A549 (cell line): ENCODE measurements at regions of chr20 and their contacts with region 1.

Region 1: DNA sequence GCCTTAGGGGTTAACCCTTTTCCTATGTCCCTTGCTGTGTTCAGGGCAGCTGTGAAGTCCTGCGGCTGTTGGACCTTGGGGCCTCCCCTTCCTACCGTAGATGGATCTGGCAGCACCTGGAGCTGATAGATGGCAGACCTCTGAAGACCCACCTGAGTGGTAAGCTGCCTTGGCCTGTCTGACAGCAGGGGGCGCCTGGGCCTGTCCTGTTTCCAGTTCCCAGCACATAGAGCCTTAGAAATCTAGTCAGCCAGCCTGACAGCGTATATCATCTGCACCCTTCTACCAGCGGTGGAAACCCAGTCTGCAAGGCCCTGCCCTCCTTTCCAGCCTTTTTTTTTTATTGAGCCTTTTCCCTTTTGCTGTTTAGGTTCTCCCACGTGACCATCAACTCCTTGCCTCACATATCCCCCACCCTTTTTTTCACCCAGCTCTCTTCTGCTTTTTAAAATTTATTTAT is 26.6 kb downstream of the CNBD2 start:
- DNase-seq: peak; percentile 87 to 91
- ATAC-seq: peak; percentile 94 to 97
- H3K4me3 ChIP-seq: no peak overlapping the region
- H3K27ac ChIP-seq: peak overlapping the region; percentile 39 to 55; a peak in 1 of 6 replicates
- H3K4me1 ChIP-seq: peaks cover 23% of the 10 kb centered on the region
- CTCF ChIP-seq: peak; percentile 93
- EP300 ChIP-seq: no peak
- POLR2A ChIP-seq: no peak
- RAD21 ChIP-seq: peak; percentile 96 to 97

Region 2: GRCh38 chr20:35806075-35806474 is 188.9 kb before region 1 on chr20:
- CTCF ChIA-PET with region 1: no interaction called
- POLR2A ChIA-PET with region 1: no interaction called
- DNase-seq: no peak
- ATAC-seq: no peak
- H3K4me3 ChIP-seq: no peak overlapping the region
- H3K27ac ChIP-seq: no peak overlapping the region
- H3K4me1 ChIP-seq: no peaks in the 10 kb centered on the region
- CTCF ChIP-seq: no peak
- EP300 ChIP-seq: no peak
- POLR2A ChIP-seq: no peak
- RAD21 ChIP-seq: no peak

Region 3: DNA sequence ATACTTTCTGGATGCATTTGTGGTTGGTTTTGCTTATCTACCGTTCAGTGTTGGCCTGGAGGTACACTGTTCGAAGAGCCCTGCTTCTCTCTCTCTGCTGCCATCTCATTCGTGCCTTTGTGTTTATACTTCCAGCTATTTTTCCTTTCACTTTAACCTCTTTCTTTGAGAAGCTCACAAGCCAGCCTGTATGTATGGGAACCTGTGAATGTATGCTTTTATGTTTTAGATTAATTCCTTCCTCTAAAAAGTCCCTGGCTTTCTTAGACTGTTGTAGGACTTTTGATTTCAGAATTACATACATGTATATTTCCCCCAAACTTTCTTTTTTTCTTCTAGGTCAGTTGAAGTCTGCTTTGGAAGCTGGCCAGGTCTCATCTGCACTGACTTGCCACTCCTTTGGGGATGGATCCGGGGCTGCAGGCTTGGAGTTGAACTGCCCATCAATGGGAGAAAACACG is 123.7 kb before region 1 on chr20:
- CTCF ChIA-PET with region 1: no interaction called
- POLR2A ChIA-PET with region 1: no interaction called
- DNase-seq: peak in 1 of 2 experiments; percentile 50
- ATAC-seq: peak; percentile 70 to 74; a peak in 5 of 6 replicates
- H3K4me3 ChIP-seq: no peak overlapping the region
- H3K27ac ChIP-seq: peak overlapping the region; percentile 60 to 65
- H3K4me1 ChIP-seq: peaks cover 70% of the 10 kb centered on the region
- CTCF ChIP-seq: no peak
- EP300 ChIP-seq: no peak
- POLR2A ChIP-seq: no peak
- RAD21 ChIP-seq: no peak

Region 4: GRCh38 chr20:35978041-35978513 is 16.9 kb before region 1 on chr20:
- CTCF ChIA-PET with region 1: interaction called, 137 read pairs
- POLR2A ChIA-PET with region 1: no interaction called
- DNase-seq: no peak
- ATAC-seq: no peak
- H3K4me3 ChIP-seq: no peak overlapping the region
- H3K27ac ChIP-seq: peak overlapping the region; percentile 8 to 28; a peak in 3 of 6 replicates
- H3K4me1 ChIP-seq: peaks cover 13% of the 10 kb centered on the region; the same call in 2 of the 3 replicates
- CTCF ChIP-seq: no peak
- EP300 ChIP-seq: no peak
- POLR2A ChIP-seq: no peak
- RAD21 ChIP-seq: no peak

Region 5: GRCh38 chr20:36017034-36017951 is 22.3 kb after region 1 on chr20:
- CTCF ChIA-PET with region 1: interaction called, 40 read pairs
- POLR2A ChIA-PET with region 1: no interaction called
- DNase-seq: peak; percentile 65 to 81
- ATAC-seq: peak; percentile 89 to 94
- H3K4me3 ChIP-seq: no peak overlapping the region; the same call in 2 of the 3 replicates
- H3K27ac ChIP-seq: peak overlapping the region; percentile 73 to 84
- H3K4me1 ChIP-seq: peaks cover 25% of the 10 kb centered on the region
- CTCF ChIP-seq: no peak
- EP300 ChIP-seq: no peak
- POLR2A ChIP-seq: no peak
- RAD21 ChIP-seq: no peak

Region 6: DNA sequence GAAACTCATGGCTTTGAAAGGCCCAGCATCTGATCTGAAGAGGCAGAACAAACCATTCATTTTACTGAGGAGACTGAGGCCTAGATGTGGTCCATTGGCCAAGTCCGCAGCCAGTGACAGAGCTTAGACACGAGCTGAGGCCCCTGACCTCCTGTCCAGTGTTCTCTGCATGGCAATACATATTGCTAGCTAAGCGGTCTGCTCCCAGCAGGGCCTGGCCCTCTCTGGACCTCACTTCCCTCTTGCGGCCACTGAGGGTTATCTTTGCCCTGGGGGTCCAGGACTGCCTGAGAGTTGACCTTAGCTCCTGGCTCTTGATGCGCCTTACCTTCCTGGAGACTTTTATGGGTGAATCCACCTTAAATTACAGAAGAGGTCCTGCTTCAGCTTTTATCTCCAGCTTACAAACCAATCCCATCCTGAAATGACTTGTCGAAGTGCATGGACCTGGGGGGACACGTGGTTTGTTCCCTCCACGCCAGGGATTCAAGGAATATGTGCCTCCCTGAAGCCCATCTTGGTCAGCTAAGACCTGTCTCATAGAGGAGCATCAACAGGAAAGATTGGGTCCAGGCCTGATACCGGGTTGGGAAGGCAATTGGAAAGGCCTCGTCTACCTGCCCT is 49.0 kb after region 1 on chr20:
- CTCF ChIA-PET with region 1: interaction called, 12 read pairs
- POLR2A ChIA-PET with region 1: interaction called, 6 read pairs
- DNase-seq: no peak
- ATAC-seq: peak; percentile 52 to 68; a peak in 4 of 6 replicates
- H3K4me3 ChIP-seq: no peak overlapping the region
- H3K27ac ChIP-seq: no peak overlapping the region
- H3K4me1 ChIP-seq: peaks cover 27% of the 10 kb centered on the region; the same call in 2 of the 3 replicates
- CTCF ChIP-seq: no peak
- EP300 ChIP-seq: no peak
- POLR2A ChIP-seq: no peak
- RAD21 ChIP-seq: no peak

Region 7: GRCh38 chr20:36113566-36114250 is 118.7 kb after region 1 on chr20:
- CTCF ChIA-PET with region 1: interaction called, 28 read pairs
- POLR2A ChIA-PET with region 1: interaction called, 9 read pairs
- DNase-seq: no peak
- ATAC-seq: no peak
- H3K4me3 ChIP-seq: no peak overlapping the region
- H3K27ac ChIP-seq: no peak overlapping the region
- H3K4me1 ChIP-seq: peaks cover 6% of the 10 kb centered on the region; the same call in 1 of the 3 replicates
- CTCF ChIP-seq: no peak
- EP300 ChIP-seq: no peak
- POLR2A ChIP-seq: no peak
- RAD21 ChIP-seq: no peak

Region 8: DNA sequence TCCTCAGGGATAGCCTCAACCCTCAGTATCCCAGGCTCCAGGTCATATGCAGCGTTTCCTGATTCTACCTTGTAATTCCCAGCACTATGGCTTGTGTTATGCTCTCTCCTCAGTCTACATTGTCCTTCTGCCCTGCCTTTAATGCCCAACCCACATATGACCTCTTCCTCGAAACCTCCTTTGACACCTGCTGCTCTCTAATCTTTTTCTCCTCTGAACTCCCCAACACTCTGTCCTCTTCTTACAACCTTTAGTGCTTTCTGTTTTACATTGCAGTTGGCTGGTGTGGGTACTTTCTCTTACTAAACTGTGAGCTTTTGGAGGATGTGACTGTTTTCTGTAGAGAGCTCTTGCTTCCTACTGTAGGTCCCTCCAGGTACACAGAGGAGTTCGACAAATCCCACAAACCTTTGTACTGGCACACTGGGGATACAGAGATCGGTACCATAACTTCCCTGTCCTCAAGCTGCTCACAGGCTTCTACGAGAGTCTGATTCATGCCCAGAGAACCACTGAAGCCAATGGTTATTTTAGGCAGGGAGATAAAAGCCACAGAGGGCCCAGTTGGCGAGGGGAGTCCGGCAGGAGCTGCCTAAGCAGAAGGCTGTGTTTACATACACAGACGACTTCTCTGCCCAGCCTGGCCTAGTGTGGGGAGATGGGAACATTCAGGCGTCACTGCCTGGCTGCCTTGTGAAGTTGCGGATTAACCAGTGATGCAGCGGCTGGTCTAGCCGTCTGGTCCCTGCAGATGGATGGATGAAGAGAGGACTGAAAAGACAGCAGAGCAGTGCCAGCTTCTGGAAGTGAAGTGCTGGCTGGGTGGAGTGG is 151.1 kb after region 1 on chr20:
- CTCF ChIA-PET with region 1: interaction called, 516 read pairs
- POLR2A ChIA-PET with region 1: no interaction called
- DNase-seq: no peak
- ATAC-seq: no peak
- H3K4me3 ChIP-seq: no peak overlapping the region
- H3K27ac ChIP-seq: no peak overlapping the region
- H3K4me1 ChIP-seq: peaks cover 35% of the 10 kb centered on the region
- CTCF ChIP-seq: no peak
- EP300 ChIP-seq: no peak
- POLR2A ChIP-seq: no peak
- RAD21 ChIP-seq: no peak

Region 9: GRCh38 chr20:36199345-36200257 is 204.6 kb after region 1 on chr20:
- CTCF ChIA-PET with region 1: interaction called, 38 read pairs
- POLR2A ChIA-PET with region 1: no interaction called
- DNase-seq: peak; percentile 80 to 91
- ATAC-seq: peak; percentile 89 to 94
- H3K4me3 ChIP-seq: no peak overlapping the region
- H3K27ac ChIP-seq: peak overlapping the region in 1 of 2 experiments; percentile 34; a peak in 1 of 6 replicates
- H3K4me1 ChIP-seq: no peaks in the 10 kb centered on the region
- CTCF ChIP-seq: peak; percentile 81
- EP300 ChIP-seq: no peak
- POLR2A ChIP-seq: no peak
- RAD21 ChIP-seq: peak; percentile 84 to 88